Sigmoid colon (tissue), 7 donors: ENCODE measurements at regions of chr4 and their contacts with region 1.

Region 1: DNA sequence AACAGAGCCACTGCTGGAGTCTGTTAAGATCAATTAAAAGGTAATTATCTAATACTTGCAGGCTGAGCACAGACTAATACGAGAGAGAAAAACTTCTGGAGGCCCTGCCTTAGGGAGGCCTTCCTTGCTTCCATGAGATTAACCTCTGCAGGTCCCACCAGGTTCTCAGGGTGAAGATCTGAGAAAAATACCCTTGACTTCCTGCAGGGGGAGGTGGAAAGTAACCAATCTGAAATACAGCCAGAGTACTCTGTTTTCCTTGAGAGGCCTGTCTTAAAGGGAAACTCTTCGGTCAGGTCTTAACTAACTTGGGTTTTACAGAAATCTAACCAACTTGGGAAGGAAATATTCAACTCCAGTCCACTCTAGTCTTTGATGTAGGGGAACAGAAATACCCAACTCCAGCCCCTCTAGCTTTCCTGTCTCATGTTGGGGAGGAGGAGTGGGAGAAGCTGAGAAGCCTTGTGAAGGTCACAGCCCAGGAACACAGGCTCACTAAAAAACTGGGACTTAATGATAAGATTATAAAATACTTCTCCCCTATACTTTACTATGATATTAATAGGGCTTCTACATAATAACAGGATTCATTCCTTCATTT is 77.1 kb downstream of the TBCK start:
- DNase-seq: no peak
- H3K4me3 ChIP-seq: no peak overlapping the region
- H3K27ac ChIP-seq: no peak overlapping the region
- H3K4me1 ChIP-seq: no peaks in the 10 kb centered on the region
- H3K27me3 ChIP-seq: no peaks in the 10 kb centered on the region
- CTCF ChIP-seq: peak in 3 of 4 experiments; percentile 18 to 46 (median 23)
- EP300 ChIP-seq: no peak
- POLR2A ChIP-seq: no peak

Region 2: GRCh38 chr4:104490770-104491480 is 1748.0 kb before region 1 on chr4:
- intact Hi-C with region 1: no loop called
- DNase-seq: peak; percentile 87
- H3K4me3 ChIP-seq: peak overlapping the region; percentile 54 to 74 (median 68)
- H3K27ac ChIP-seq: peak overlapping the region; percentile 85 to 91 (median 88)
- H3K4me1 ChIP-seq: peaks cover 0 to 33% (median 19%) of the 10 kb centered on the region in 4 donors
- H3K27me3 ChIP-seq: no peaks in the 10 kb centered on the region
- CTCF ChIP-seq: no peak
- EP300 ChIP-seq: no peak
- POLR2A ChIP-seq: no peak

Region 3: DNA sequence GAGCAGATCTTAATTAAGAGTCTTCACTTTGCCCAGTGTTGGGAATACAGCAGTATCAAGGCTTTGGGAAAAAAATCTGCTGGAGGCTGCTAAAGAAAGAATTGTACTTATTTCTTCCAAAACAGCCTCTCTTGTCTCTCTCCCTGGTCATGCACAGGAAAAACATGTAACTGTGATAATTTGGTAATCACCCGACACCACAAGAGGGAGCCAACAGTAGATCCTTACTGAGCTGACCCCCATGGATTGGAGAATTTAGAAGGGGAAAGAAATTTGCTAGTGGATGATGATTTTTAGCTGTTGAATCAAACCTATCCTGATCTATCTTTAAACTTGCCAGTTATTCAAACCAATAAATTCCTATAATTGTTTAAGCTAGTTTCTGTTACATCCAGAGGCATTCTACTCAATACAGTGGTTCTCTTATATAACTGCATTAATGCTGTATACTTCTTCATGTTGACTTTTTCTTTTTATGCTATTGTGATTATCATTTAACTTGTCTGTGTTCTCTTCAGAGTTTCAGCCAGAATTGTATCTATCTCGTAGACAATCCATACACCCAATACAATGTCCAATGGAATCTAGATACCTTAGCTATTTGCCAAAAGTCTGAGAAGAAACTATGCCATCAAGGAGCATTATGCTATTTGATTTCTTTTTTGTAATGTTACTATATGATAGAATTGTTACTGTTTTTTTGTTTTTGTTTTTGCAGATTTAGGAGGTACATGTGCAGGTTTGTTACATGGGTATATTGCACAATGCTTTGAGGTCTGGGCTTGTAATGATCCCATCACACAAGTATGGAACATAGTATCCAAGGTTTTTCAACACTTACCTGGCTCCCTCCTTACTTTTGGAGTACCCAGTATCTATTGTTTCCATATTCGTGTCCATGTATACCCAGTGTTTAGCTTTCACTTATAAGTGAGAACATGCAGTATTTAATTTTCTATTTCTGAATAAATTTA is 717.8 kb before region 1 on chr4:
- intact Hi-C with region 1: no loop called
- DNase-seq: no peak
- H3K4me3 ChIP-seq: no peak overlapping the region
- H3K27ac ChIP-seq: no peak overlapping the region
- H3K4me1 ChIP-seq: no peaks in the 10 kb centered on the region
- H3K27me3 ChIP-seq: no peaks in the 10 kb centered on the region
- CTCF ChIP-seq: peak; percentile 22 to 54 (median 49)
- EP300 ChIP-seq: no peak
- POLR2A ChIP-seq: no peak

Region 4: DNA sequence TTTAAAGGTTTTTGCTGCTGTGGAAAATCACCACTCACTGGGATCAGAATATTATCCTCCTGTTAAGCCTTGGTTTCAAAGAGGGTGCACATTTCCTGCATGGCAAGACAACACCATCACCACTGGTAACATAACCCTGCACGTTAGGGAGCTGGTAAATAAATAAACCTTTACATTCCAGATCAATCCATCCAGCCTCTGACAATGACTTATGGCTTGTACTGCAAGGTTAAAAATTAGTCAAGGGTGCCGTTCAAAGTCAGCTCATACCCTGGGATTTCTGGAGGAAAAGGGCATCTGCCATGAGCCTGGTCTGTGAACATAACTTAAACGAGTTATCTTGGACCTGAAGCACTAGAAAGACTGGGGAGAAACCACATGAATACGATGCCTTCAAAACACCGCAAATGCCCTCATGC is 240.7 kb before region 1 on chr4:
- intact Hi-C with region 1: no loop called
- DNase-seq: no peak
- H3K4me3 ChIP-seq: no peak overlapping the region
- H3K27ac ChIP-seq: no peak overlapping the region
- H3K4me1 ChIP-seq: peaks cover 0 to 25% (median 4%) of the 10 kb centered on the region in 4 donors
- H3K27me3 ChIP-seq: no peaks in the 10 kb centered on the region
- CTCF ChIP-seq: no peak
- EP300 ChIP-seq: no peak
- POLR2A ChIP-seq: no peak

Region 5: DNA sequence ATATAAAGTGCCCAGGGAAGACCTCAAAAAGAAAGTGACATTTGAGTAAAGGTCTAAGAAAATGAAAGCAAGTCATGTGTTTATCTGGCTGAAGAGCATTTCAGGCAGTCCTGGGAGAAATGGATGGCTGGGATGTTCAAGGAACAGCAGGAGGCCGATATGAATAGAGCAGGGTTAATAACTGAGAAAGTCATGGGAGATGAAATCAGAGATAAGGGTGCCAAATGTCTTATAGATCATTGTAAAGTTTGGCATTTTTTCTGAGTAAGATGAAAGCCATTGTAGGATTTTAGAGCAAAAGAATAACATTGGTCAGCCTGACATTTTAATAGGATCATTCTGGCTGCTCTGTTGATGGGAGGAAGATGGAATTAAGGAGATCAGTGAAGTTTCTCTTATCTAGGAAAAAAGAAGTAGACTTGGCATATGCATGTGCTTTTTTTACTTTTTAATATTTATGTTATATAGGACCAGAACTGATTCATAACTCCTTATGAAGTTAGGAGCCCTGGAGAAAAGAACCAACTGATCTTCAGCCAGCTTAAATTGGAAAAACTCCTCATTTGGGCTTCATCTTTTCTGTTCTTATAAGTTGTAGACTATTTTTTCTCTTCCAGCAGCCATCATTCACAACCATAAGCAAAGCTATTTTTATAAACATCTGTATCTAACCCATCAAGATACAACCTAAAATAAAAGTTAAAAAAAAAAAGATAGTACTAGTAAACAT is 96.0 kb after region 1 on chr4:
- intact Hi-C with region 1: loop called (anchors 10 kb)
- DNase-seq: no peak
- H3K4me3 ChIP-seq: no peak overlapping the region
- H3K27ac ChIP-seq: no peak overlapping the region
- H3K4me1 ChIP-seq: no peaks in the 10 kb centered on the region
- H3K27me3 ChIP-seq: no peaks in the 10 kb centered on the region
- CTCF ChIP-seq: no peak
- EP300 ChIP-seq: no peak
- POLR2A ChIP-seq: no peak